CD4-positive, alpha-beta T cell (primary cell): ENCODE measurements at regions of chr22 and their contacts with region 1.

Region 1: DNA sequence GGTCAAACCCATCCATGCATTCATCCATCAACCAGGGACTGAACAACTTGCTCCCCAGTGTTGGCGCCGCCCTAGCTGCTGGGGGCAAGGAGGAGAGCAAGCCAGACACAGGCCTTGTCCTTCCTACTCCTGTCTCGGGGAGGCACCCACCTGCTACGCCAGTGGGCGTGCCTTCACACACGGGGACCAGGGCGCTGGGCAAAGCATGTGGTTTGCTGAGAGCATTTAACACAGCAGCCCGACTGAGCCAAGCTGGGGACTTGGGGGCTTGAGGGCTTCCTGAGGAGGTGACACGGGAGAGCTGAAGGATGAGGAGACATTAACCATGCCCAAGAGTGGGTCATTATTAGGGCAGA is 30.6 kb downstream of the CACNA1I start:
- DNase-seq: no peak
- ATAC-seq: no peak
- H3K4me3 ChIP-seq: no peak overlapping the region
- H3K4me3 Mint-ChIP-seq: no peak overlapping the region
- H3K27ac ChIP-seq: no peak overlapping the region
- H3K27ac Mint-ChIP-seq: peak overlapping the region; percentile 62
- H3K4me1 ChIP-seq: peaks cover 38% of the 10 kb centered on the region
- H3K4me1 Mint-ChIP-seq: peaks cover 48% of the 10 kb centered on the region
- H3K27me3 ChIP-seq: no peaks in the 10 kb centered on the region
- H3K27me3 Mint-ChIP-seq: no peaks in the 10 kb centered on the region
- CTCF ChIP-seq: no peak

Region 2: GRCh38 chr22:39456262-39457197 is 144.6 kb before region 1 on chr22 and contains the start of gene MGAT3:
- CTCF ChIA-PET with region 1: no interaction called
- POLR2A ChIA-PET with region 1: no interaction called
- intact Hi-C with region 1: no loop called
- DNase-seq: peak in 2 of 14 experiments; percentile 10 to 41
- ATAC-seq: peak; percentile 35
- H3K4me3 ChIP-seq: no peak within 1 kb of the TSS
- H3K4me3 Mint-ChIP-seq: peak within 1 kb of the TSS; percentile 76
- H3K27ac ChIP-seq: no peak within 1 kb of the TSS
- H3K27ac Mint-ChIP-seq: no peak within 1 kb of the TSS
- H3K4me1 ChIP-seq: peaks cover 19% of the 10 kb centered on the region
- H3K4me1 Mint-ChIP-seq: peaks cover 21% of the 10 kb centered on the region
- H3K27me3 ChIP-seq: peaks cover 24 to 25% of the 10 kb centered on the region in 2 experiments
- H3K27me3 Mint-ChIP-seq: peaks cover 47% of the 10 kb centered on the region
- CTCF ChIP-seq: no peak
- total RNA-seq, gene MGAT3: 0.17 TPM in 1 of 2 experiments, not detected in the other

Region 3: DNA sequence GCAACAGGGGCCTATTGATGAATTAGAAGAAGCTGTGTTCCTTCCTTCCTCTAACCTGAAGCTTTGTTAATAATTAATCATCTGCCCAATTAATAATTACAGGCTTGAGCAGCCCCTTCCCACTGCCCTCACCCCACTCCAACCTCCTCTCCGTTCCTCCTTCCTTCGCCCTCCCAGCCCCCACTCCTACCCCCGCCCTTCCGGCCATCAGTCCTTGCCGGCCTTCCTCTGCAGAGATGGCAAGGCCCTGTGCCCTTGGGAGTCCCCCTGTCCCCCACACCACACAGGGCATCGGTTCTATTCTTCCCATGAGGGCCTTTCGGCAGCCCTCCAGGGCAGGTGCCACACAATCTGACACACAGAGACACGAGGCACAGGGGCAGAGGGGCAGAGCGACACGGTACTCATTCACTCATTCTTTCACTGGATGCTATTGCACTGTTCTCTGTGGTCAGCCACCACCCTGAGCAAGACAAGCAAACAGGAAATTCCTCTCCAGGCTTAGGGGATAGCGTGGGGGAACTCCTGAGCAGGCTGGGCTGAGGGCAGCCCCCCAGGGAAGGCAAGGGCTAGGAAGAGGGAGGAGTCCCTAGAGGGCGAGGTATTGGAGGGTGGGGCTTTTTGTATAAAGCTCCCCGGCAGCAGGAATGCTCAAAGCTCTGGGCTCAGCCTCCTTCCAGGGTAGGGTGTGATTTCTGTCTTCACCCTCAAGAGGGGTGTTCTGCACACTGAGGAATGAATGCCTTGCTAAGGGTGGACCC is 129.6 kb before region 1 on chr22:
- CTCF ChIA-PET with region 1: no interaction called
- POLR2A ChIA-PET with region 1: no interaction called
- intact Hi-C with region 1: no loop called
- DNase-seq: peak in 3 of 14 experiments; percentile 12 to 34 (median 16)
- ATAC-seq: peak; percentile 21
- H3K4me3 ChIP-seq: no peak overlapping the region
- H3K4me3 Mint-ChIP-seq: no peak overlapping the region
- H3K27ac ChIP-seq: no peak overlapping the region
- H3K27ac Mint-ChIP-seq: no peak overlapping the region
- H3K4me1 ChIP-seq: peaks cover 21% of the 10 kb centered on the region
- H3K4me1 Mint-ChIP-seq: peaks cover 18% of the 10 kb centered on the region
- H3K27me3 ChIP-seq: no peaks in the 10 kb centered on the region
- H3K27me3 Mint-ChIP-seq: no peaks in the 10 kb centered on the region
- CTCF ChIP-seq: no peak

Region 4: DNA sequence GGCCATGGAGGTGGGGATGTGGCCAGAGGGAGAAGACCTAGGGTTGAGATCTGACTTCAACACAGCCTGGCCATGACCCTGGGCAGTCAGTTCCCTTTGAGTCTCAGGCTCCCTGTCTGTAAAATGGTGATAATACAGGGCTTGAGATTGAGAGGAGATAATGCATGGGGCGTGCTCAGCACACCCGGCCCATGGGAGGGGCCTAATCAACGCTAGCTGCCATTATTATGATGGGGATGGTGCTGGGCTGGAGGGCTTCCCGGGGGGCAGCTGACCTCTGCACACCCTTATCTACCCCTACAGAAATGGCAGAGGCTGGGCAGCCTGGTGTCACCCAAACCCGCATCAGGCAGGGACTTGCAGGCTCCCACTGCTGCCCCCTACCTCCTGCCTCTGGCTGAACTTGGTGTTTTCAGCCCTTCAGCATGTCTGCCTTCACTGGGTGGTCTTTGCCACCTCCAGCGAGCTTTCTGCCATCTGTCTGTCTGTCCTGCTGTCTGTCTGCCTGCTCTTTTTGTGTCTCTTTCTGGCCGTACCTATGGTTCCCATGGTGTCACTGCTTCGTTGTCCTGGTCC is 53.9 kb after region 1 on chr22:
- CTCF ChIA-PET with region 1: no interaction called
- POLR2A ChIA-PET with region 1: interaction called, 5 read pairs
- intact Hi-C with region 1: loop called in 1 of 2 experiments (anchors 5 kb)
- DNase-seq: no peak
- ATAC-seq: no peak
- H3K4me3 ChIP-seq: no peak overlapping the region
- H3K4me3 Mint-ChIP-seq: no peak overlapping the region
- H3K27ac ChIP-seq: no peak overlapping the region
- H3K27ac Mint-ChIP-seq: peak overlapping the region; percentile 67
- H3K4me1 ChIP-seq: peaks cover 47% of the 10 kb centered on the region
- H3K4me1 Mint-ChIP-seq: peaks cover 47% of the 10 kb centered on the region
- H3K27me3 ChIP-seq: no peaks in the 10 kb centered on the region
- H3K27me3 Mint-ChIP-seq: no peaks in the 10 kb centered on the region
- CTCF ChIP-seq: no peak